Activated T-helper 2 cell treated with anti-CD3 and anti-CD28 coated beads, Interferon-gamma antibody, Interleukin-2, Interleukin-4, amounts not matched to agents 10 μg/mL and 5 μg/mL and 100 μg/mL, durations not matched to agents 14 hours and 24 hours and 36 hours (primary cell): ENCODE measurements at regions of chr18 and their contacts with region 1.

Region 1: DNA sequence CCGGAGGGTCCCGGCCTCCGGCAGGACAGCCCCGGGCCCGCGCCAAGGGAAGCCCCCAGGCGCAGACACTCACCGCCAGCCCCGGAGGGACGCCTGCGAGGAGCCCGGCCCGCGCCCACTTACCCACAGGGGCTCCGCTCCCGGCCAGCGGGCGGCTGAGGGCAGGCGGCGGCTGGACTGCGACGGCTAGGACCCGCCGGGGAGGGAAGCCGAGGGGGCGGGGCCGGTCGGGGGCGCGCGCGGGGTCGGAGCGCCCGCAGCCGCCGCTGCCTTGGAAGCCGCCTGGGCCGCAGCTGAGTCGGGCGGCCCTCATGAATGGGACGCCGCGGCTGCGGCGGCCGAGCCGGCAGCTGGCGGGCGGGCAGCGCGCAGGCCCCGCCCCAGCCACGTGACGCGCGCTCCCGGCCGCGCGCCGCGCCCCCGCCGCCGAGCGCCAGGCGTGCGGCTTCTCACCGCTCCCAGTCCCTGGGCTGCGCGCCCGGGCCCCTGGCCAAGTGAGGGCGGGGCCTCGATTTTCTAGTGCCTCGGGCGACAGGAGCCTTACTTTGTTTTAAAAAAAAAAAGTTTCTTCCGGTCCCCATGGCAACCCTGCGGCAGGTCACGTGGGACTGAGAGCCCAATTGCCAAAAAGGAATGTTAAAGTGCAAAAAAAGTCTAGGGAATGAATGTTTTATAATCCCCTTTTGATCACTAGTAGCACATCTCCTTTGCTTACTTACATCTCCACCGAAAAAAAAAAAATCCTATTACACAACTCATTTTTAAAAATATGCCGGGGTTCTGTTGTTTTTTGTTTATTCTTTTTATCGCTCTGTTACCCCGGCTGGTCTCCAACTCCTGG is at the start of gene LPIN2:
- DNase-seq: peak; percentile 96
- H3K4me3 Mint-ChIP-seq: peak within 1 kb of the TSS; percentile 97
- H3K27ac Mint-ChIP-seq: peak within 1 kb of the TSS; percentile 92
- H3K4me1 Mint-ChIP-seq: peaks cover 58% of the 10 kb centered on the region
- H3K27me3 Mint-ChIP-seq: no peaks in the 10 kb centered on the region
- total RNA-seq, gene LPIN2: 87.9 and 95.9 TPM in 2 replicates

Region 2: GRCh38 chr18:2111456-2111855 is 901.7 kb before region 1 on chr18:
- intact Hi-C with region 1: no loop called
- DNase-seq: no peak
- H3K4me3 Mint-ChIP-seq: no peak overlapping the region
- H3K27ac Mint-ChIP-seq: no peak overlapping the region
- H3K4me1 Mint-ChIP-seq: no peaks in the 10 kb centered on the region
- H3K27me3 Mint-ChIP-seq: peaks cover 5% of the 10 kb centered on the region

Region 3: DNA sequence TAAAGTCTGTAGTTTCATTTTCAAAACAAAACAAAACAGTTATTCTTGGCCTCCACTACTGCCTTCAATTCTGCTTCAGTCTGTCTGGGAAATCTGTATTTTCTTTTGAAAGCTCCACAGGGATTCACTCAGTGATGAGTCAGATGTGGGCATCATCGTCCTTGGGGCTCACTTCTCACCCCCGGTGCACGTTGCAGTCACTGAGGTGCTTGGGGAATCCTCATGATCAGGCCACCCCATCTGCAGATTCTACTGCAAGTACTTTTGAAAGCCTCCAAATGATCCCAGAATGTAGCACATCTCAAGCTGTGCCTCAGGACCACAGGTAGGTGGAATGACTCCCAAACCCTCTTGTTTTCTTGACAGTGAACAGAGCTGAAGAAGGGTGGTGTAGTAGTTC is 34.5 kb before region 1 on chr18:
- intact Hi-C with region 1: loop called (anchors 1 kb)
- DNase-seq: no peak
- H3K4me3 Mint-ChIP-seq: peak overlapping the region; percentile 75
- H3K27ac Mint-ChIP-seq: peak overlapping the region; percentile 91
- H3K4me1 Mint-ChIP-seq: peaks cover 74% of the 10 kb centered on the region
- H3K27me3 Mint-ChIP-seq: no peaks in the 10 kb centered on the region

Region 4: GRCh38 chr18:3129053-3129864 is 116.1 kb after region 1 on chr18:
- intact Hi-C with region 1: loop called (anchors 5 kb)
- DNase-seq: peak; percentile 72
- H3K4me3 Mint-ChIP-seq: no peak overlapping the region
- H3K27ac Mint-ChIP-seq: no peak overlapping the region
- H3K4me1 Mint-ChIP-seq: peaks cover 6% of the 10 kb centered on the region
- H3K27me3 Mint-ChIP-seq: no peaks in the 10 kb centered on the region